GM12878 (cell line): ENCODE measurements at regions of chr6 and their contacts with region 1.

Region 1: DNA sequence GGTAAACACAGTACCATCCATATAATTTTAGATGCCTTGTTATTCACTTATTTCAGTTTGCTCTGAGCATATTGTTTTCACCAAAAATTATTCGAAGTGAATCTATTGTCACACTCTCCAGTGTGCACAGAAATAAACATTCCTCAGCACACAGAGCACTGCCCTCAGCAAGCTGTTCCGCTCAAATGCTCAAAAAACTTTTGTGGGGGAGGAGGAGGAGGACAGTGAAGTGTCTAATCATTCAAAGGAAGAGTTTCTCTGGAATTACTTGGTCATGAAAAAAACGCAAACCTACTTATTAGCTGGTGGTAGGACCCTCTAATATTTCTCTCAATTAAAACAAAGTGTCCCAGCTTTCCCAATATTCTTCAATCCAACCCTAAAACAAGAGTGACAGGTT is 88.3 kb downstream of the DTNBP1 start:
- DNase-seq: no peak
- ATAC-seq: no peak
- H3K4me3 ChIP-seq: no peak overlapping the region
- H3K27ac ChIP-seq: no peak overlapping the region
- H3K4me1 ChIP-seq: peaks cover 5% of the 10 kb centered on the region
- H3K27me3 ChIP-seq: no peaks in the 10 kb centered on the region
- CTCF ChIP-seq: no peak
- EP300 ChIP-seq: no peak
- POLR2A ChIP-seq: no peak
- RAD21 ChIP-seq: no peak

Region 2: GRCh38 chr6:15351631-15352030 is 222.9 kb before region 1 on chr6:
- CTCF ChIA-PET with region 1: no interaction called
- POLR2A ChIA-PET with region 1: no interaction called
- RAD21 ChIA-PET with region 1: no interaction called
- SMC1A ChIA-PET with region 1: no interaction called
- in situ Hi-C with region 1: no loop called
- intact Hi-C with region 1: no loop called
- DNase-seq: no peak
- ATAC-seq: no peak
- H3K4me3 ChIP-seq: no peak overlapping the region
- H3K27ac ChIP-seq: peak overlapping the region; percentile 65
- H3K4me1 ChIP-seq: peaks cover 39% of the 10 kb centered on the region
- H3K27me3 ChIP-seq: no peaks in the 10 kb centered on the region
- CTCF ChIP-seq: no peak
- EP300 ChIP-seq: no peak
- POLR2A ChIP-seq: no peak
- RAD21 ChIP-seq: no peak

Region 3: DNA sequence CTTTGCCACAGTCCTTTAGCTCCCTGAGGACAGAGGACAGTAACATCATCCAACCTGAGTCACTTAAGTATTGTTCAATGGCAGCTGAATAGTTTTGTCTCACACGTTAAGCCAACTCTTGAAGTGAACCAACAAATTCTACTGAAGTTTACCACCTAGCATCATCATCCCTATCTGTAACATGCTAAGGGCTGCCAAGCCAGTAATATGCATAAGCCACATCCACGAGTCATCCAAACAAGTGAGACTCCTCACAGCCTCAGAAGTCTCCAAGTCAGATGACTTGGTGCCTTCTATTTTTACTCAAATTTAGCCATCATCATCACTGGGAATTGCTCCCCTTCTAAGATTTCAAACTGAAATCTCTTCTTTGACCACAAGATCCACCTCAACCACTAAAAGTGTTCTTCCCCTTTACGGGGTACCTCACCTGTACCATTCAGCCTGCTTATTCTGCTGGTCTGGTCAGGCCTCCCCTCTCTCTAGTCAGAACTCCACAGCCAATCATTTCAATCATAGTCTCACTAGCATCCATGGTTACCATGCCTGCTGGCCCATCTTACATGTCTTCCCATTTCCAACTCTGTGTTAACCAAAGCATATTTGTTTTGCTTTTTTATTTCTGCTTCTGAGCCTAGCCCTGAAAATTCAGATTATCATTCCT is 14.6 kb after region 1 on chr6:
- CTCF ChIA-PET with region 1: interaction called, 5 read pairs
- POLR2A ChIA-PET with region 1: interaction called, 3 read pairs
- RAD21 ChIA-PET with region 1: interaction called, 8 read pairs
- SMC1A ChIA-PET with region 1: interaction called, 10 read pairs
- in situ Hi-C with region 1: no loop called
- intact Hi-C with region 1: no loop called
- DNase-seq: no peak
- ATAC-seq: peak; percentile 38; the same call in 2 of the 3 replicates
- H3K4me3 ChIP-seq: no peak overlapping the region
- H3K27ac ChIP-seq: no peak overlapping the region
- H3K4me1 ChIP-seq: no peaks in the 10 kb centered on the region; the same call in 1 of the 2 replicates
- H3K27me3 ChIP-seq: no peaks in the 10 kb centered on the region
- CTCF ChIP-seq: no peak
- EP300 ChIP-seq: no peak
- POLR2A ChIP-seq: no peak
- RAD21 ChIP-seq: no peak